ENCODE measurements at regions of chr2 and their contacts with region 1.

Region 1: DNA sequence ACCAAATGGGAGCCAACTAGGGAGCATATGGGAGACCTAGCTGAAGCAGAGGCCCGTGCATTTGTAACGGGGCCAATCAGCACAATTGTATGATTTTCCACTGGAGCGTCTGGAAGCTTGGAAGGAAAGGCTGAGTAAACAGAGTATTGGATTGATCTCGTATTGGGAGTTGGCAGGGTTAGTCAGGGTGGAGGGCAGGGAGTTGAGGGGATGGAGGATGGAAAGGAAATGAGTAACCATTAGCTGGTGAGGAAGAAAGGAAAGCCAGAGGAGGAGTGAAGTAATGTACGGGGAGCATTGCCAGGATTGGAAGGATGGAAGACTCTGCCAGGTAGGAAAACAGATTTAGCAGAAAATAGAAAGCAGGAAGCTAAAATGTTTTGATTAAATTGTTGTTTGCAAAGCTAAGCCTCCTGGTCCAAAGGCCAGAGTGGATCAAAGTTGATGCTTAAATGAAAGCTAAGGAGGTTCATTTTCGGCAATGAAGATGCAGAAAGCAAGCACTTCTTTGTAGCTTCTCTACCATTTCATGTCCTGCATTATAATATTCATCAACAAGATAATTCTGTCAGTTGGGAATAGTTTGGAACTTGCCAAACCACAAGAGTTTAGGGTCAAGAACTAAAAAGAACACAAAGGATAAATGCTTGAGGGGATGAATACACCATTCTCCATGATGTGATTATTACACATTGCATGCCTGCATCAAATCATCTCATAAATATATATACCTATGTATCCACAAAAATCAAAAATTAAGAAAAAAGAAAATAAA is 75.6 kb upstream of the TTN start:
- DNase-seq: no peak
- ATAC-seq: peak; percentile 87

Region 2: GRCh38 chr2:178782236-178782635 is 100.6 kb before region 1 on chr2:
- intact Hi-C with region 1: no loop called
- DNase-seq: no peak
- ATAC-seq: no peak

Region 3: DNA sequence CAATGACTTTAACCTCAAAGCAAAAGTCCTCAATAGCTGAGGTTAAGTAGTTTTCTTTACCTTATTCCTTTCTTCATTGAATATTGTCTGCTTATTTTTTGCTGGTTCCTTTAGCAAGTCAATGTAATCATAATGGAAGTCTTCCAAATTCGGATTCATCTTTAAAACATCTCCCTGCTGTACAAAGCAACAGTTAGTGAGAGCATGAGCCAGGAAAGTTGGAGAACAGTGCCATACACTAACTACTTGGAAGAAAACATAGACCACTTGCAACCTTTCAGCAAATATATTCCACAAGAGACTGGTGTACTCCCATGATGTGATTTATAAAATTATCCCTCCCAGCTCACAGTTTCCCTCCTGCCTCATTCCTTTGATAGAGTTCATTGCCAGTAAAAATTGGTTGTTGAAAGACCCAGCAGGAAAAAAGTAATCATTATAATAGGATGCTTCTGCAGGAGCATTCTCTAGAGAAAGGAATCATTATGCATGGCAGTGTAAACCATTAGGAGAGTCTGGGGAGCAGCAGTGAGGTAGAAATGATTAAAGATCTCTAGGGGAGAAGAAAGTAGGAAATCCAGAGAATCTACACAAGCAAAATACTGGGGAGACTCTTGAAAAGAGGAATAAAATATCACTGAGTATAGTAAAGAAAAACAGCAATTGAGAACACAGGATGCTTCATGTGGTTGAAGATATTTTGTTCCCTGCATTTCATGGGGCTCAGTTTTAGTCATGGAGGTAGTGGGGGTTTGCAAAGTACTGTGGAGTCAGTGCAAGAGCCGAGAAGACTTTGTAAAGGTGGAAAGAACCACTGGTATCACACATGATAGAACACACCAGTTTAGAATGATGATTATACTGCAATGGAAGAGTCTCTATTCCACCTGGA is 37.0 kb before region 1 on chr2:
- intact Hi-C with region 1: loop called (anchors 1 kb)
- DNase-seq: no peak
- ATAC-seq: peak; percentile 42